B cell (primary cell): ENCODE measurements at regions of chrX and their contacts with region 1.

Region 1: DNA sequence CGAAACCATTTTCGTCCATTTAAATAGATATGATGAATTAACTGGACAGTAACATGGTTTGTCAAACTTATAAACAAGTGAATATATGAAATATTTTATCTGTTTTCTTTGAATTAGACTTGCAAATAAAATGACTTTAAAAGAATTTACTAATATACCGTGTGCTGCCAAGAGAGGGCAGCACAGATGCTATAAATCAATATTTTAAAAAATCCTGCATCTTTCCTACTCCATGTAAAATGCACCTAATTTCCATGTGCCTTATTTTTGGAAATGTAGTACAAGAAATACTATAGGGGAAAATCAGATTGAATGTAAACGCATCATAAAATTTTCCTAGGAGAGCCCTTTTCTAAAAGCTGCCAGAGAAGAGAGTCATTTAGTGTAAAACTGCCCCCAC is 62.2 kb downstream of the PRKX start:
- DNase-seq: peak; percentile 38
- ATAC-seq: no peak
- H3K4me3 ChIP-seq: no peak overlapping the region
- H3K4me3 Mint-ChIP-seq: no peak overlapping the region
- H3K27ac ChIP-seq: no peak overlapping the region
- H3K27ac Mint-ChIP-seq: no peak overlapping the region
- H3K4me1 ChIP-seq: no peaks in the 10 kb centered on the region
- H3K4me1 Mint-ChIP-seq: no peaks in the 10 kb centered on the region
- H3K27me3 ChIP-seq: no peaks in the 10 kb centered on the region
- H3K27me3 Mint-ChIP-seq: no peaks in the 10 kb centered on the region
- CTCF ChIP-seq: peak; percentile 69

Region 2: DNA sequence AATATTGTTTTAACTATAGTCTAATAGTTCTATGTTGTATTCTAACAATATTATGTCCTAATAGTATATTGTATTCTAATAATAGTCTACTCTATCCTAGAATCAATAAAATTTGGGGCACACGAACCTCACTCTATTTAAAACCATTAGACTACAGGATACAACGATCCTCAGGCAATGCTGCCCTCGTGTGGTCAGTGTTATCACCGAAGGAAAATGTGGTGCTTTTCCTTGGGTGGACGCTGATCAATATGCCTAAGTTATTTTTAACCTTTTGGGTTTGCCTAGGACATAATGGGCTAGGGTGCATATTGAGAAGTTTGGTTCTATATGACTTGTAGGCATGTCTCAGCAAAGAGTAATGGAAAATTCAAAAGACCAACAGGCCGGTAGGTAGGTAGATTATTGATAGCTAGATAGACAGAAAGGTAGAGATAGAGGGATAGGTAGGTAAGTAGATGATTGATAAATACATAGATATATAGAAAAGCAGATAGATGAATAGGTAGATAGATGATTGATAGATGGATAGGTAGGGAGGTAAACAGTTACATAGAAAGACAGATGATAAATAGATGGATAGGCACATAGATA is 12.9 kb before region 1 on chrX:
- CTCF ChIA-PET with region 1: no interaction called
- POLR2A ChIA-PET with region 1: no interaction called
- intact Hi-C with region 1: no loop called
- DNase-seq: peak; percentile 38
- ATAC-seq: no peak
- H3K4me3 ChIP-seq: no peak overlapping the region
- H3K4me3 Mint-ChIP-seq: no peak overlapping the region
- H3K27ac ChIP-seq: no peak overlapping the region
- H3K27ac Mint-ChIP-seq: no peak overlapping the region
- H3K4me1 ChIP-seq: peaks cover 0 to 3% of the 10 kb centered on the region in 2 donors
- H3K4me1 Mint-ChIP-seq: peaks cover 2% of the 10 kb centered on the region
- H3K27me3 ChIP-seq: no peaks in the 10 kb centered on the region
- H3K27me3 Mint-ChIP-seq: no peaks in the 10 kb centered on the region
- CTCF ChIP-seq: peak; percentile 47

Region 3: DNA sequence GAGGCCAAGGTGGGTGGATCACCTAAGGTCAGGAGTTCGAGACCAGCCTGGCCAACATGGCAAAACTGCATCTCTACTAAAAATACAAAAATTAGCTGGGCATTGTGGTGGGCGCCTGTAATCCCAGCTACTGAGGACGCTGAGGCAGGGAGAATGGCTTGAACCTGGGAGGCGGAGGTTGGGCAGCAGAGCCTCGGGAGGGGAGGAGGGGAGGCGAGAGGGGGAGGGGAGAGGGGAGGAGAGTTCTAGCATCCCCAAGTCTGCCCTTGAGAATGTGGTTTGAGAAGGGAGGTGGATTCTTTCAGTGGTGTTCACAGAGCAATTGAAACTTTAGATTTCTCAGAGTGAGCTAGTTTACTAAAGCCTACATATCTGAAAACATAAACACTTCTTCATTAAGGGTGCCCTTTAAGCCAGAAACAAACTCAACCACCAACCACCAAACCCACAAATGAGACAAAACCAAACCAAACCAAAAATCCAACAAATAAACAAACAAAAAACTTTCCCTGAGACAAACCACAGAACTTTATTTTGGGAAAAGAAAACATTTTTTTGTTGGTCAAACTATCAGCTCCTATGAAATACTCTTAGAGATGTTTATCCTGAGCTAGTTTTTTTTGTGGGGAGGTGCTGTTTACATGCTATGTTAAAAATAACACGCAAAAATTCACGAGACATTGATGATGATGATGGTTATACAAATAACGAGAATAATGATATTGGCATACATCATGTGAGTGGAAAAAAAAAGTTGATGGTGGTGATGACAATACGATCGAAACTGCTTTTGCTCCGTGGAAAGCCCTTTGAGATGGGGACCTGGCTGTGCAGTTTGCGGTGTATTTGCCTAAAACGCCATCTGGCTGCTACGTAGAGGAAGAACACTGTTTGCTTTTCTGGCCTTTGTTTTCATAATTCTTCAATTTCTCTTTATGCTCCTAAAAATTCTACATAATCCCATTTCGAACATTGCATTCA is 160.3 kb after region 1 on chrX:
- CTCF ChIA-PET with region 1: interaction called, 26 read pairs
- POLR2A ChIA-PET with region 1: no interaction called
- intact Hi-C with region 1: loop called (anchors 1 kb)
- DNase-seq: peak; percentile 73
- ATAC-seq: no peak
- H3K4me3 ChIP-seq: no peak overlapping the region
- H3K4me3 Mint-ChIP-seq: peak overlapping the region; percentile 41
- H3K27ac ChIP-seq: peak overlapping the region in 1 of 2 donors; percentile 28
- H3K27ac Mint-ChIP-seq: peak overlapping the region; percentile 63
- H3K4me1 ChIP-seq: peaks cover 9 to 12% of the 10 kb centered on the region in 2 donors
- H3K4me1 Mint-ChIP-seq: peaks cover 13% of the 10 kb centered on the region
- H3K27me3 ChIP-seq: peaks cover 0 to 5% (median 2%) of the 10 kb centered on the region in 4 experiments
- H3K27me3 Mint-ChIP-seq: peaks cover 17% of the 10 kb centered on the region
- CTCF ChIP-seq: peak; percentile 60